Activated CD4-positive, alpha-beta T cell treated with anti-CD3 and anti-CD28 coated beads, Interleukin-2, amount 10 ng/mL, durations not matched to agents 24 days and 14 days (primary cell): ENCODE measurements at regions of chr7 and their contacts with region 1.

Region 1: GRCh38 chr7:22110227-22110839 is 164.6 kb upstream of the CDCA7L start:
- DNase-seq: peak; percentile 89
- H3K4me3 Mint-ChIP-seq: no peak overlapping the region
- H3K27ac Mint-ChIP-seq: no peak overlapping the region
- H3K4me1 Mint-ChIP-seq: no peaks in the 10 kb centered on the region
- H3K27me3 Mint-ChIP-seq: peaks cover 3% of the 10 kb centered on the region

Region 2: GRCh38 chr7:22488643-22489462 is 378.5 kb after region 1 on chr7:
- intact Hi-C with region 1: loop called (anchors 1 kb)
- DNase-seq: peak; percentile 89
- H3K4me3 Mint-ChIP-seq: no peak overlapping the region
- H3K27ac Mint-ChIP-seq: no peak overlapping the region
- H3K4me1 Mint-ChIP-seq: peaks cover 2% of the 10 kb centered on the region
- H3K27me3 Mint-ChIP-seq: peaks cover 20% of the 10 kb centered on the region

Region 3: GRCh38 chr7:22499044-22499443 is 388.7 kb after region 1 on chr7:
- intact Hi-C with region 1: loop called (anchors 1 kb)
- DNase-seq: peak; percentile 22
- H3K4me3 Mint-ChIP-seq: no peak overlapping the region
- H3K27ac Mint-ChIP-seq: no peak overlapping the region
- H3K4me1 Mint-ChIP-seq: peaks cover 3% of the 10 kb centered on the region
- H3K27me3 Mint-ChIP-seq: peaks cover 37% of the 10 kb centered on the region